Calu3 (cell line): ENCODE measurements at regions of chr15 and their contacts with region 1.

Region 1: DNA sequence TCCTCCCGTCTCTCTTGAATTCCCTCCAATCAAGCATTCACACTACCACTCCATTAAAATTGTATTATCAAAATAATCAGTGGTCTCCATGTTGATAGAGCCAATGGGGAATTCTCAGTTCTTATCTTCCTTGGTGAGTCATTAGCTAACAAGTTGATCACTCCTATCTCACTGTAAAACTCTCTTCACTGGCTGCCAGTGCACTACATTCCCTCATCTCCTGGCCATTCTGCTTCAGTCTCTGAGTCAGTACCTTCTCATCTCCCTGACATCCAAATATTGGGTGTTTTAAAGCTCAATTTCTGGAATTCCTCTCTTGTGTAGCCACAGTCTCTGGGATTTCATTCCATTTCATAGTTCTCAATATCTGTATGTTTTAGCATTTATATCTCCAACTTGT is 175.2 kb downstream of the ALDH1A2 start:
- DNase-seq: no peak
- H3K4me3 Mint-ChIP-seq: no peak overlapping the region
- H3K27ac Mint-ChIP-seq: no peak overlapping the region
- H3K4me1 Mint-ChIP-seq: no peaks in the 10 kb centered on the region
- H3K27me3 Mint-ChIP-seq: peaks cover under 1% of the 10 kb centered on the region
- CTCF ChIP-seq: no peak

Region 2: GRCh38 chr15:57878573-57878972 is 11.8 kb before region 1 on chr15:
- CTCF ChIA-PET with region 1: interaction called, 10 read pairs
- intact Hi-C with region 1: no loop called
- DNase-seq: no peak
- H3K4me3 Mint-ChIP-seq: no peak overlapping the region
- H3K27ac Mint-ChIP-seq: peak overlapping the region; percentile 40
- H3K4me1 Mint-ChIP-seq: peaks cover 21% of the 10 kb centered on the region
- H3K27me3 Mint-ChIP-seq: peaks cover 2% of the 10 kb centered on the region
- CTCF ChIP-seq: no peak